ENCODE measurements at regions of chr4 and their contacts with region 1.

Region 1: GRCh38 chr4:112523764-112524505 is 8.0 kb upstream of the NEUROG2 start:
- DNase-seq: peak; percentile 84 to 98
- H3K4me3 ChIP-seq: peak overlapping the region; percentile 27 to 58 (median 32); a peak in 5 of 8 replicates
- H3K27ac ChIP-seq: no peak overlapping the region
- H3K4me1 ChIP-seq: peaks cover 9 to 18% (median 14%) of the 10 kb centered on the region in 4 experiments; a peak in 6 of 7 replicates
- H3K27me3 ChIP-seq: peaks cover 40 to 60% (median 47%) of the 10 kb centered on the region in 4 experiments
- CTCF ChIP-seq: peak in 2 of 3 experiments; percentile 96 to 98; a peak in 3 of 4 replicates
- EP300 ChIP-seq: no peak
- POLR2A ChIP-seq: no peak
- RAD21 ChIP-seq: peak; percentile 91 to 98

Region 2: GRCh38 chr4:112312610-112313239 is 211.2 kb before region 1 on chr4:
- CTCF ChIA-PET with region 1: interaction called, 22 read pairs
- POLR2A ChIA-PET with region 1: no interaction called
- DNase-seq: no peak
- H3K4me3 ChIP-seq: no peak overlapping the region
- H3K27ac ChIP-seq: no peak overlapping the region
- H3K4me1 ChIP-seq: peaks cover 0 to 9% (median 2%) of the 10 kb centered on the region in 4 experiments; a peak in 4 of 7 replicates
- H3K27me3 ChIP-seq: no peaks in the 10 kb centered on the region
- CTCF ChIP-seq: no peak
- EP300 ChIP-seq: no peak
- POLR2A ChIP-seq: no peak
- RAD21 ChIP-seq: no peak

Region 3: GRCh38 chr4:112348488-112349158 is 175.3 kb before region 1 on chr4:
- CTCF ChIA-PET with region 1: interaction called, 44 read pairs
- POLR2A ChIA-PET with region 1: no interaction called
- DNase-seq: peak in 1 of 2 experiments; percentile 63
- H3K4me3 ChIP-seq: no peak overlapping the region
- H3K27ac ChIP-seq: no peak overlapping the region
- H3K4me1 ChIP-seq: peaks cover 0 to 2% (median under 1%) of the 10 kb centered on the region in 4 experiments; a peak in 3 of 7 replicates
- H3K27me3 ChIP-seq: no peaks in the 10 kb centered on the region
- CTCF ChIP-seq: peak; percentile 60 to 69 (median 64)
- EP300 ChIP-seq: no peak
- POLR2A ChIP-seq: no peak
- RAD21 ChIP-seq: peak; percentile 56 to 67

Region 4: GRCh38 chr4:112377171-112377570 is 146.8 kb before region 1 on chr4:
- CTCF ChIA-PET with region 1: interaction called, 26 read pairs
- POLR2A ChIA-PET with region 1: interaction called, 3 read pairs
- DNase-seq: no peak
- H3K4me3 ChIP-seq: no peak overlapping the region
- H3K27ac ChIP-seq: no peak overlapping the region
- H3K4me1 ChIP-seq: peaks cover 0 to 5% (median 2%) of the 10 kb centered on the region in 4 experiments; a peak in 4 of 7 replicates
- H3K27me3 ChIP-seq: peaks cover 0 to 14% (median 10%) of the 10 kb centered on the region in 4 experiments; a peak in 4 of 7 replicates
- CTCF ChIP-seq: no peak
- EP300 ChIP-seq: no peak
- POLR2A ChIP-seq: no peak
- RAD21 ChIP-seq: no peak

Region 5: GRCh38 chr4:112418092-112418491 is 105.8 kb before region 1 on chr4:
- CTCF ChIA-PET with region 1: interaction called, 11 read pairs
- POLR2A ChIA-PET with region 1: no interaction called
- DNase-seq: peak; percentile 19 to 84
- H3K4me3 ChIP-seq: no peak overlapping the region
- H3K27ac ChIP-seq: no peak overlapping the region
- H3K4me1 ChIP-seq: peaks cover 0 to 3% (median 1%) of the 10 kb centered on the region in 4 experiments; a peak in 2 of 7 replicates
- H3K27me3 ChIP-seq: no peaks in the 10 kb centered on the region
- CTCF ChIP-seq: peak; percentile 76 to 82 (median 78)
- EP300 ChIP-seq: no peak
- POLR2A ChIP-seq: no peak
- RAD21 ChIP-seq: peak; percentile 62 to 77

Region 6: DNA sequence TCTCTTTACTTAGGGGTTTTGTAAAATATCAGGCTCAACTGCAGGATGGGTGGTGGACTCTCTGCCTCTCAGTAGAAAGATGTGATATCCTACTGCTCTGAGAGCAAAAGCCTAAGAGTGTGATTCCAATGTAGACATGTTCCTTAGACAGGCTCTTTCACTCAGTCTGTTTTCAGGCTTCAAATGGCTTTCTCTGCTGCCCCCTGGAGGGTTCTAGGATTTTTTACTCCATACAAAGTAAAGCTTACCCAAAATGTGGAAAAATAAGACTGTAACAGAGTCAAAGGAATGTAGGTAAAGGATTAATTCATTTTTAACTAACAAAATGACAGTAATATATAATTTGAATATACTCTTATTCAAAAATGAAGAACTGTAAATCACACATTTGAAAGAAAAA is 80.7 kb after region 1 on chr4:
- CTCF ChIA-PET with region 1: interaction called, 12 read pairs
- POLR2A ChIA-PET with region 1: no interaction called
- DNase-seq: peak; percentile 5 to 53
- H3K4me3 ChIP-seq: no peak overlapping the region
- H3K27ac ChIP-seq: no peak overlapping the region
- H3K4me1 ChIP-seq: no peaks in the 10 kb centered on the region
- H3K27me3 ChIP-seq: no peaks in the 10 kb centered on the region
- CTCF ChIP-seq: peak in 2 of 3 experiments; percentile 62 to 69; a peak in 3 of 4 replicates
- EP300 ChIP-seq: no peak
- POLR2A ChIP-seq: no peak
- RAD21 ChIP-seq: peak; percentile 56 to 67

Region 7: GRCh38 chr4:112735474-112735951 is 211.6 kb after region 1 on chr4:
- CTCF ChIA-PET with region 1: no interaction called
- POLR2A ChIA-PET with region 1: no interaction called
- DNase-seq: no peak
- H3K4me3 ChIP-seq: no peak overlapping the region
- H3K27ac ChIP-seq: no peak overlapping the region
- H3K4me1 ChIP-seq: peaks cover 0 to 6% (median 2%) of the 10 kb centered on the region in 4 experiments; a peak in 4 of 7 replicates
- H3K27me3 ChIP-seq: no peaks in the 10 kb centered on the region
- CTCF ChIP-seq: no peak
- EP300 ChIP-seq: no peak
- POLR2A ChIP-seq: no peak
- RAD21 ChIP-seq: peak in 1 of 2 experiments; percentile 8; a peak in 1 of 4 replicates

Region 8: DNA sequence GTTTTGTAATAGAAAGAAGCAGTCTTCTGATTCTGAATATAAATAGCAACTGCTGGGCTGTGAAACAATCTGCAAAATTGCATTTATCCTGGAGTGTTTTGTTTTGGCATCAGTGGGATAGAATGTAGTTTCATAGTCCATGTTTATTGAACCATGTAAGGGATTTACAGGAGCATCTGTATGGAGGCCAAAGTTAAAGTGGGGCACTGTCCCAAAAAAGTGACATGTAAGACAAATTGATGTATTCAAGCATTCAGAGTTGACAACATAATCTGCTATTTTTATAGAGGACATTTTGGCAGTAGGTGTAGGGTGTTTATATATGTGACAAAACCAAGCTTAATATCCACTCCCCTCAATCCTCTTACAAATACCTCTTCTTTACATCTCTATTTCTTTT is 325.0 kb after region 1 on chr4:
- CTCF ChIA-PET with region 1: no interaction called
- POLR2A ChIA-PET with region 1: no interaction called
- DNase-seq: no peak
- H3K4me3 ChIP-seq: no peak overlapping the region
- H3K27ac ChIP-seq: no peak overlapping the region
- H3K4me1 ChIP-seq: no peaks in the 10 kb centered on the region
- H3K27me3 ChIP-seq: no peaks in the 10 kb centered on the region
- CTCF ChIP-seq: no peak
- EP300 ChIP-seq: no peak
- POLR2A ChIP-seq: no peak
- RAD21 ChIP-seq: no peak